MCF 10A (cell line): ENCODE measurements at regions of chr14 and their contacts with region 1.

Region 1: GRCh38 chr14:67166450-67166853 is 22.8 kb upstream of the GARIN2 start:
- DNase-seq: peak; percentile 62
- H3K4me3 Mint-ChIP-seq: no peak overlapping the region
- H3K27ac Mint-ChIP-seq: no peak overlapping the region
- H3K4me1 Mint-ChIP-seq: peaks cover 8% of the 10 kb centered on the region
- H3K27me3 Mint-ChIP-seq: no peaks in the 10 kb centered on the region
- CTCF ChIP-seq: peak; percentile 79

Region 2: DNA sequence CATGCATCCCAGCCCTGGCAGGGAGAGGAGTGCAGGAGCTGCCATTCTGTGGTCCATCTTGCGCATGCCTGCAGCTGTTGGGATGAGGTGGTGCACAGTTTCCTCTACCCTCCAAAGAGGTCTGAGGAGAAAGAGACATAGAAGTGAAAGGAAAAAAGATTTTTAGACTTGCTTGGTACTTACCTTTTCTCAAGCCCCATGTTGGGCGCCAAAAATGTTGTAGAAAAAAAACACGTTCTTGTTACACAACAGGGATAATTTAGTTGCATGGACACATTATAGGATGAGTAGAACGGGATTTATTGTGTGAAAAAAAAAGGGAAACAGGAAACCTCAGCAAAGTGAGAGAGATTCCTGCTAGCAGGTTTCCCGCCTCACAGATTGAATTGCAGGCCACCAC is 221.6 kb before region 1 on chr14:
- CTCF ChIA-PET with region 1: no interaction called
- POLR2A ChIA-PET with region 1: no interaction called
- intact Hi-C with region 1: no loop called
- DNase-seq: peak; percentile 40
- H3K4me3 Mint-ChIP-seq: no peak overlapping the region
- H3K27ac Mint-ChIP-seq: no peak overlapping the region
- H3K4me1 Mint-ChIP-seq: no peaks in the 10 kb centered on the region
- H3K27me3 Mint-ChIP-seq: no peaks in the 10 kb centered on the region
- CTCF ChIP-seq: no peak

Region 3: GRCh38 chr14:67335781-67336180 is 169.3 kb after region 1 on chr14:
- CTCF ChIA-PET with region 1: no interaction called
- POLR2A ChIA-PET with region 1: no interaction called
- intact Hi-C with region 1: loop called (anchors 1 kb)
- DNase-seq: peak; percentile 42
- H3K4me3 Mint-ChIP-seq: no peak overlapping the region
- H3K27ac Mint-ChIP-seq: peak overlapping the region; percentile 25
- H3K4me1 Mint-ChIP-seq: peaks cover 9% of the 10 kb centered on the region
- H3K27me3 Mint-ChIP-seq: no peaks in the 10 kb centered on the region
- CTCF ChIP-seq: no peak